PC-3 (cell line): ENCODE measurements at regions of chr2 and their contacts with region 1.

Region 1: GRCh38 chr2:38740851-38741731 is 10.1 kb downstream of the SRSF7 start:
- DNase-seq: peak; percentile 72
- ATAC-seq: peak; percentile 60
- H3K4me3 ChIP-seq: no peak overlapping the region
- H3K27ac ChIP-seq: no peak overlapping the region
- H3K4me1 ChIP-seq: no peaks in the 10 kb centered on the region
- H3K27me3 ChIP-seq: no peaks in the 10 kb centered on the region
- CTCF ChIP-seq: peak; percentile 64

Region 2: DNA sequence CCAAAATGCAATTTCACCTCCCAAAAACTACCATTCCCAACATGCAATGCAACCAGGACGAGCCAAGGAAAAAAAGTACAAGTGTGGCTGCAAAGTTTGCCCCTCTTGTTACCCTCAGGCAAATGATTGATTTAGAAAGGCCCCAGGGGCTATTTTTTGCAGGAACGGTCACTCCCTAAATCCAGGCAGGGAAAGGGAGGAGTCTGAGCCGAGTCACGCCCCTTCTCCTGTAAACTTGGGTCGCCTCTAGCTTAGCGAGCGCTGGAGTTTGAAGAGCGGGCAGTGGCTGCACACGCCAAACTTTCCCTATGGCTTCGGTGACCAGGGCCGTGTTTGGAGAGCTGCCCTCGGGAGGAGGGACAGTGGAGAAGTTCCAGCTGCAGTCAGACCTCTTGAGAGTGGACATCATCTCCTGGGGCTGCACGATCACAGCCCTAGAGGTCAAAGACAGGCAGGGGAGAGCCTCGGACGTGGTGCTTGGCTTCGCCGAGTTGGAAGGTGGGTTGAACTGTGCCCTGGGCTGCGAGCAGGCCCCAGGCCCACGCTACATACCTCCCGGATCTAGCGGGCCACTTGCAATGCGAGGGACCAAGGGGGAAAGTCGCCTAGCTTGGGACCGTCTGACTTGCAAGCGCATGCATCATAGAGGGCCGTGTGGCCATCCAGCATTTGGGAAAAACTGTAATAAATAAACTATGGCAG is 75.1 kb before region 1 on chr2 and contains the start of gene GALM:
- CTCF ChIA-PET with region 1: no interaction called
- POLR2A ChIA-PET with region 1: no interaction called
- intact Hi-C with region 1: no loop called
- DNase-seq: peak; percentile 94
- ATAC-seq: peak; percentile 91
- H3K4me3 ChIP-seq: peak within 1 kb of the TSS; percentile 83
- H3K27ac ChIP-seq: peak within 1 kb of the TSS; percentile 21
- H3K4me1 ChIP-seq: peaks cover 14% of the 10 kb centered on the region
- H3K27me3 ChIP-seq: no peaks in the 10 kb centered on the region
- CTCF ChIP-seq: no peak
- total RNA-seq, gene GALM: 22.7 and 26.4 TPM in 2 replicates

Region 3: DNA sequence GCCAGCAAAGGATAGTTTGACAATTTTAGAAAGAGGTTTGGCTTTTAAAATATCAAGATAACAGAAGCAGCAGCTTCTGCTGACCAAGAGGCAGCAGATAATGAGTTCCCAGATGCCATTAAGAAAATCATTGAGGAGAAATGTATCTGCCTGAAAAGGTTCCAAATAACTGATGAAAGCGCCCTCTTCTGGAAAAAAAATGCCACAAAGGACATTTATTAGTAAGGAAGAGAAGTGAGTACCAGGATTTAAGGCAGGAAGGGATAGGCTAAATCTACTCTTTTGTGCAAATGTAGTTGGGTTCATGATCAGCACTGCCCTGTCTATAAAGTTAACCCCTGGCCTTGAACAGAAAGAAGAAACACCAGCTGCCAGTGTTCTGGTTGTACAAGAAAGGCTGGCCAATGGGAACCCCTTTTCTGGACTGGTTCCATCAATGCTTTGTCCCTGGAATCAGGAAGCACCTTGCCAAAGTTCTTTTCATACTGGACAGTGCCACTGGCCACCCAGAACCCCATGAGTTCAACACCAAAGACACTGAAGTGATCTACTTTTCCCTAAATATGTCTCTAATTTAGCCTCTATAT is 94.0 kb after region 1 on chr2:
- CTCF ChIA-PET with region 1: no interaction called
- POLR2A ChIA-PET with region 1: no interaction called
- intact Hi-C with region 1: loop called (anchors 5 kb)
- DNase-seq: peak; percentile 71
- ATAC-seq: no peak
- H3K4me3 ChIP-seq: no peak overlapping the region
- H3K27ac ChIP-seq: no peak overlapping the region
- H3K4me1 ChIP-seq: no peaks in the 10 kb centered on the region
- H3K27me3 ChIP-seq: no peaks in the 10 kb centered on the region
- CTCF ChIP-seq: peak; percentile 74